Calu3 (cell line): ENCODE measurements at regions of chr3 and their contacts with region 1.

Region 1: DNA sequence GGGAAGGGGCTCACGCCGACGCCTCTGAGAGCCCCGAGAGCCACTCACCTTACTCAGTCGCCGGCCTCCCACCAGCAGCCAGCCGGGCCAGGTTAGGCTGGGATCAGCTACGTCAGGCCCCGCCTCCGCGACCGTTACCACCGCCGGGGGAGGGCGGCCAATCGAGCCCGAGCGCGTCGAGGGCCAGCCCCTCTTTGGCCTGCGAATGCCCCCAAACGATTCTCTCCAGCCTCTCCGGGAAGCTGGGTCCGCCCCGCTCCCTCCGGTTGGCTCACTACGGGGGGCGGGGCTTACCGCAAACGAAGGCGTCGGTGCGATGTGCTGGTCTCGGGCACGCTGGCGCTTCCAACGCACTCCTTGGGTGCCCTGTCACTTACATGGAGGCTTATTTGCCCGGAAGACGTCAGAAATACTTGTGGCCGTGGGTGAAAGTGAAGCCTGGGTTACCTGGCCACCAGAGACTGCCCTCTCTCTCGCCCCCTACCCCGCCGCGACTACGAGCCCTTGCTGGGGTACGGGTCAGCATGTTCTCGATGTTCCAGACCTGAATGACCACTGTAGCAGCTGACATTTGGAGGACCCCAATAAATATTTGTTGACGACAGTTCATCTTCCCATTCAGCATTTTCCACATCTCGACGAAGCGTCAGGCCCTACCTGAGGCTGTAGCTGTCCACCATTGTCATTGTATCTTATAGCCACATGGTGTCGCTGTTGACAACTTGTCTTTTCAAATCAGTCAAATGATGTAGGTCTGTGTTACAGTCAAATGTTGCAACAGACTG is at the start of gene CEP70:
- DNase-seq: peak; percentile 100
- H3K4me3 Mint-ChIP-seq: peak within 1 kb of the TSS; percentile 80
- H3K27ac Mint-ChIP-seq: peak within 1 kb of the TSS; percentile 90
- H3K4me1 Mint-ChIP-seq: peaks cover 38% of the 10 kb centered on the region
- H3K27me3 Mint-ChIP-seq: no peaks in the 10 kb centered on the region
- CTCF ChIP-seq: peak; percentile 97
- total RNA-seq, gene CEP70: 88.8 and 99.1 TPM in 2 replicates

Region 2: DNA sequence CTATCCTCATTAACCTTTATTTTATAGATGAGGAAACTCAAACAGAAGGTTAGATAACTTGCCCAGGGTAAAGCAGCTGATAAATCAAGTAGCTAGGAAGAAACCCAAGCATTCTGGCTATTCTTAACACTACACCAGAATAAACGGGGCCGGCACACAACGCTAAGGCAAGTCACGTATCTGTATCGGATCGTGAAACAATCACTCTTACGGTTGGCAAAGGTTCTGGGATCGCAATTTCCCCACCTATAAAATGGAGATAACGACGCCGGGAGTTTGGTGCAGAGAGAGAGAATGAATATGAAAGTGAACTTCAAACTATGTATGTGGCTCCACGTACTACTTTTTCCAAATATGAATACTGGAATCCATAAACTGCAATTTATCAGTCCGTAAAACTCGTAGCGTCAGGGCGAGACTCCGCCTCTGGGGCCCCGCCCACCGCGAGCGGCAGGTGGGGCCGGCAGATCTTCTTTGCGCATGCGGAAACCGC is 407.5 kb before region 1 on chr3:
- CTCF ChIA-PET with region 1: no interaction called
- intact Hi-C with region 1: loop called (anchors 10 kb)
- DNase-seq: peak; percentile 96
- H3K4me3 Mint-ChIP-seq: peak overlapping the region; percentile 92
- H3K27ac Mint-ChIP-seq: peak overlapping the region; percentile 98
- H3K4me1 Mint-ChIP-seq: peaks cover 32% of the 10 kb centered on the region
- H3K27me3 Mint-ChIP-seq: no peaks in the 10 kb centered on the region
- CTCF ChIP-seq: no peak

Region 3: DNA sequence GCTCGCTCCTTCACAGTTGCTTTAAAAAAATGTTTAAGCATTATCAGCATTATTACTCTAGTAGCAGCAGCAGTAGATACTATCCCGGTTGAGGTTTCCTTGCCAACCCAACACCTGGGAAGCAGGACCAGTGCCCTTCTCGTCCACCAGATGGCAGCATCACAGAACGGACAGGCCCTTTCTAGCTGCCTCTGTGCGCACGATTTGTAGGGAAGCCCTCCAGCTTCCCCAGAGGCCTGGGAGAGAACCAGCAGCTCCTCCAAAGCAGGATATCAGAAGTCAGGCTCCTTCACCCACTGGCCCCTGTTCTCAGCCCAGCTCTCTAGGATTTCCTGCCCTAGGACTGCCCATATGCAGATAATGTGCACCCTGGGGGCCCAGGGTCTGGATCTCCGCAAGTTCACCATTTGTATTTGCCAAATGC is 176.8 kb before region 1 on chr3:
- CTCF ChIA-PET with region 1: no interaction called
- intact Hi-C with region 1: loop called (anchors 2 kb)
- DNase-seq: peak; percentile 94
- H3K4me3 Mint-ChIP-seq: no peak overlapping the region
- H3K27ac Mint-ChIP-seq: no peak overlapping the region
- H3K4me1 Mint-ChIP-seq: no peaks in the 10 kb centered on the region
- H3K27me3 Mint-ChIP-seq: peaks cover 59% of the 10 kb centered on the region
- CTCF ChIP-seq: peak; percentile 90

Region 4: DNA sequence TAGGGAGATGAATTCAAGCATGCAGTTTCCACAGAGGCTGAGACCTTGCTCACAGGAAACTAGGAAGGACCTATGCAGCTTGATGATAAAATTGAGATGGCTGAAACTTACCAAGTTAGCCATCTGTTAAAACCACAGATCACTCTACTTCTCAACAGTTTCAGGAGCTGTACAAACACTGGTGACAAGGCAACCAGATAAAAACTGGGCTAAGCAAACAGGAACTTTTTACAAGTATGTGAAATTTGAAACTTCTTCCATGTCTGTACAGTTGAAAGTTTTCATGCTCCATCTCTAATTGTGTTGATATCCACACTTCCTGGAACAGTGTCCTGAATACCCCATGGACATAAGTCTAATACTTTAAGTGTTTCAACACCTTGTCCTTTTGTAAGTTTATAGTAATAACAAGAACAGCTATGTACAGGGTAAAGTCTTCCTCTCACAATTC is 92.5 kb after region 1 on chr3:
- CTCF ChIA-PET with region 1: interaction called, 9 read pairs
- intact Hi-C with region 1: loop called (anchors 2 kb)
- DNase-seq: peak; percentile 34
- H3K4me3 Mint-ChIP-seq: no peak overlapping the region
- H3K27ac Mint-ChIP-seq: peak overlapping the region; percentile 40
- H3K4me1 Mint-ChIP-seq: peaks cover 15% of the 10 kb centered on the region
- H3K27me3 Mint-ChIP-seq: no peaks in the 10 kb centered on the region
- CTCF ChIP-seq: no peak

Region 5: GRCh38 chr3:138774529-138775253 is 180.3 kb after region 1 on chr3:
- CTCF ChIA-PET with region 1: no interaction called
- intact Hi-C with region 1: loop called (anchors 5 kb)
- DNase-seq: peak; percentile 71
- H3K4me3 Mint-ChIP-seq: no peak overlapping the region
- H3K27ac Mint-ChIP-seq: no peak overlapping the region
- H3K4me1 Mint-ChIP-seq: peaks cover 19% of the 10 kb centered on the region
- H3K27me3 Mint-ChIP-seq: no peaks in the 10 kb centered on the region
- CTCF ChIP-seq: no peak

Region 6: GRCh38 chr3:138862924-138863775 is 268.8 kb after region 1 on chr3:
- CTCF ChIA-PET with region 1: interaction called, 8 read pairs
- intact Hi-C with region 1: loop called (anchors 1 kb)
- DNase-seq: peak; percentile 87
- H3K4me3 Mint-ChIP-seq: peak overlapping the region; percentile 52
- H3K27ac Mint-ChIP-seq: peak overlapping the region; percentile 94
- H3K4me1 Mint-ChIP-seq: peaks cover 34% of the 10 kb centered on the region
- H3K27me3 Mint-ChIP-seq: no peaks in the 10 kb centered on the region
- CTCF ChIP-seq: no peak

Region 7: GRCh38 chr3:138923531-138923994 is 329.2 kb after region 1 on chr3:
- CTCF ChIA-PET with region 1: interaction called, 36 read pairs
- intact Hi-C with region 1: loop called (anchors 1 kb)
- DNase-seq: peak; percentile 98
- H3K4me3 Mint-ChIP-seq: no peak overlapping the region
- H3K27ac Mint-ChIP-seq: no peak overlapping the region
- H3K4me1 Mint-ChIP-seq: peaks cover 14% of the 10 kb centered on the region
- H3K27me3 Mint-ChIP-seq: no peaks in the 10 kb centered on the region
- CTCF ChIP-seq: peak; percentile 90